H1 (cell line): ENCODE measurements at regions of chr18 and their contacts with region 1.

Region 1: GRCh38 chr18:48445540-48445939 is 36.4 kb upstream of the ZBTB7C start:
- DNase-seq: peak; percentile 31 to 92
- H3K4me3 ChIP-seq: no peak overlapping the region
- H3K27ac ChIP-seq: no peak overlapping the region
- H3K4me1 ChIP-seq: peaks cover 0 to 2% (median 2%) of the 10 kb centered on the region in 4 experiments; a peak in 2 of 7 replicates
- H3K27me3 ChIP-seq: no peaks in the 10 kb centered on the region; a peak in 1 of 7 replicates
- CTCF ChIP-seq: peak; percentile 88 to 98 (median 94)
- EP300 ChIP-seq: no peak
- POLR2A ChIP-seq: no peak
- RAD21 ChIP-seq: peak; percentile 72 to 79

Region 2: GRCh38 chr18:48024009-48024512 is 421.5 kb before region 1 on chr18:
- CTCF ChIA-PET with region 1: interaction called, 52 read pairs
- POLR2A ChIA-PET with region 1: no interaction called
- DNase-seq: no peak
- H3K4me3 ChIP-seq: no peak overlapping the region
- H3K27ac ChIP-seq: no peak overlapping the region
- H3K4me1 ChIP-seq: peaks cover 0 to 5% (median 1%) of the 10 kb centered on the region in 4 experiments; a peak in 3 of 7 replicates
- H3K27me3 ChIP-seq: no peaks in the 10 kb centered on the region
- CTCF ChIP-seq: no peak
- EP300 ChIP-seq: no peak
- POLR2A ChIP-seq: no peak
- RAD21 ChIP-seq: no peak

Region 3: DNA sequence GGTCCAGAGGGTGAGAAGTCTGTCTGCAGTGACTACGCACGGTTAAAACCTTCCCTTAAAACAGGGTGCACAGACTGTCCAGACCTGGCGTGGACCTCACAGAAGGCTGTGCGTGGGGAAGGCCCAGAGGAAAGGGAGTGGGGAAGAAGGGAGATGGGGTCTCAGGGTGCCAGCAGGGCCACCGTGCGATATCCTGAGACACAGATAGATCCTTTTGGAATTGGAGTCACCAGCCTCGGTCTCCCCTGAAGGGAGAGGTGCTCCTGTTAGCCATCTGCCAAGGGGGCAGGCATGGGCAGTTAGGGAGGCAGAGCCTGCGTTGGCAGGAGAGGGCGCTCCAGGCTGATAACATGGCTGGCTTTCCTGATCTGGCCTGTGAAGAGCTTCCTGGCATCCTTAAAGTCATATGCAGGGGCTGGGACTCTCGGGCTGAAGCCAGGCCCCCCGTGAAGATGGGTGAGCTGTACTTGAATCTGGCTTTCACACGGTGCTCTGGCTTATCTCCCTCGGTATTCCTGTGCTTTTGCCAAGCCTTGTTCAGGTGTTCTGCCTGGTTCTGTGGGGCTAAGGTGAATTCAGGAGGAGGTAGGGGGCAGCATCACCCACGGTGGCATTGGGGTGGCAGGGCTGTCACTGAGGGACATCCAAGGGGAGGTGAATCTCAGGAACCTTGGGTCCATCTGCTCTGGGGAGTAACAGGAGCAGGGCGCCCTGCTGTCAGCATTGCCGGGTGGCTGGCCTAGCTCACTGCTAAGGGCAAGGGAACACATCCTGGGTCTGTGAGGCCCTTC is 407.9 kb before region 1 on chr18:
- CTCF ChIA-PET with region 1: interaction called, 15 read pairs
- POLR2A ChIA-PET with region 1: no interaction called
- DNase-seq: peak in 1 of 2 experiments; percentile 69
- H3K4me3 ChIP-seq: no peak overlapping the region
- H3K27ac ChIP-seq: no peak overlapping the region
- H3K4me1 ChIP-seq: no peaks in the 10 kb centered on the region
- H3K27me3 ChIP-seq: no peaks in the 10 kb centered on the region; a peak in 1 of 7 replicates
- CTCF ChIP-seq: peak; percentile 78 to 88 (median 87)
- EP300 ChIP-seq: no peak
- POLR2A ChIP-seq: no peak
- RAD21 ChIP-seq: peak; percentile 83 to 86

Region 4: DNA sequence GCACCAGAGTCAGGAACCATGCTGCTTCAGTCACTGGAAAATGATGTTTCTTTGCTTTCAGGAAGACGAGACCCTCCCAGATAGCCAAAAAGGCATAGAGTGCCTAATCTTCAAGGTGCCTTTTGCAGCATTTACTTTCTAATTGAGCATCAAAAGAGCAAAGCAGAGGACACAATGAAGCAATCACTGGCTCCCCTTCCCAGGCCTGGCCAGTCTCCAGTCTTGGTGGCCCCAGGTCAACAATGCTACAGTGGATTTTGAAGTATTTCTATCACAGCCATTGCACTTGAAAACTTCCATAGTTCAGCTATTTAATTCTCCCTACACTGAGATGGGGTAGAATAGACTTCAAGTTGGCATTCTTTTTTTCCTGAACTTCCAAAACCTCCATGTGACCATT is 51.8 kb before region 1 on chr18:
- CTCF ChIA-PET with region 1: interaction called, 12 read pairs
- POLR2A ChIA-PET with region 1: no interaction called
- DNase-seq: no peak
- H3K4me3 ChIP-seq: no peak overlapping the region
- H3K27ac ChIP-seq: no peak overlapping the region
- H3K4me1 ChIP-seq: peaks cover 0 to 13% (median 1%) of the 10 kb centered on the region in 4 experiments; a peak in 2 of 7 replicates
- H3K27me3 ChIP-seq: no peaks in the 10 kb centered on the region; a peak in 2 of 7 replicates
- CTCF ChIP-seq: no peak
- EP300 ChIP-seq: no peak
- POLR2A ChIP-seq: no peak
- RAD21 ChIP-seq: no peak

Region 5: GRCh38 chr18:48419277-48420022 is 26.1 kb before region 1 on chr18:
- CTCF ChIA-PET with region 1: interaction called, 21 read pairs
- POLR2A ChIA-PET with region 1: no interaction called
- DNase-seq: no peak
- H3K4me3 ChIP-seq: no peak overlapping the region
- H3K27ac ChIP-seq: no peak overlapping the region
- H3K4me1 ChIP-seq: no peaks in the 10 kb centered on the region; a peak in 1 of 7 replicates
- H3K27me3 ChIP-seq: peaks cover 1 to 11% (median 4%) of the 10 kb centered on the region in 4 experiments; a peak in 4 of 7 replicates
- CTCF ChIP-seq: peak; percentile 43 to 68 (median 57)
- EP300 ChIP-seq: no peak
- POLR2A ChIP-seq: no peak
- RAD21 ChIP-seq: peak in 1 of 2 experiments; percentile 37; a peak in 1 of 4 replicates

Region 6: DNA sequence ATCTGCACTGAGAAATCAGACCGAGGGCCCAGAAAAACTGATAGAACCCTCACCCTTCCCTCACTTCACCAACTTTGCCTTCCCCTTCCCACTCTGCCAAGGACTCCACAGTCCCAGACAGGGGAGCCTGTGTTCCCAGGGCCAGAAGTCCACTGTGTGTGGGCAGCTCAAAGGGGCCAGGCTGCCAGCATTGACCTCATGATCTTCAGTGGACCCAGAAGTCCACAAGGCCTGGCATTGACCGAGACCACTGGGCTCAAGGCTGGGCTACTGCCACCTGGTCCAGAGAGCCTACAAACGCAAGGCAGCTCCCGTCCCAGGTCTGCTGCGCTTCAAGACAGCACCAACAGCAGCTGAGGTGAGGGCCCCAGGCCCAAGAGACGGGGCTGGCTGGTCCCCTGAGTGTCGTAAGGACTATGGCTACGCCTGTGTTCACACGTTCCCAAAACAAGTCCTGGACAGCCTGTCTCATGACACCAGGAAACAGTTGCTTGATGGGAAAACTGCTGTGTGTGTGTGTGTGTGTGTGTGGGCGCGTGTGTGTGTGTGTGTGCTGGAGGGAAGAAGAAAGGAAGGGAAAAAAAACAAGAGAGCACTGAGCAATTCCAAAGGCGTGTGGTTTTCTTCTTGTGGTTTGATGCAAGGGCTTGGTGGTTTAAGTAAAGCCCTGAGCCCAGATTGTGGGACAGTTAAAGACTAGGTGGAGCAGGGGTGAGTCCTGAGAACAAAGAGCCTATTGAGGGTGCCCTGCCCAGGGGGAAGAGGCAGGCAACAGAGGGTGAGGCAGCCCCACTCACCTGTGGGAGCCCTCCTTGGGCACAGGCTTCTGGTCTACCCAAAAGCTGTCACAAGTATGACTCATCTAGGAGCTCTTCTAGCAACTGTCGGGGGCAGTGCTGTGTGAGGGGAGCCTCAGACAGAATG is 10.3 kb after region 1 on chr18:
- CTCF ChIA-PET with region 1: interaction called, 57 read pairs
- POLR2A ChIA-PET with region 1: interaction called, 3 read pairs
- DNase-seq: no peak
- H3K4me3 ChIP-seq: no peak overlapping the region
- H3K27ac ChIP-seq: no peak overlapping the region
- H3K4me1 ChIP-seq: no peaks in the 10 kb centered on the region; a peak in 1 of 7 replicates
- H3K27me3 ChIP-seq: no peaks in the 10 kb centered on the region
- CTCF ChIP-seq: no peak
- EP300 ChIP-seq: no peak
- POLR2A ChIP-seq: no peak
- RAD21 ChIP-seq: no peak

Region 7: DNA sequence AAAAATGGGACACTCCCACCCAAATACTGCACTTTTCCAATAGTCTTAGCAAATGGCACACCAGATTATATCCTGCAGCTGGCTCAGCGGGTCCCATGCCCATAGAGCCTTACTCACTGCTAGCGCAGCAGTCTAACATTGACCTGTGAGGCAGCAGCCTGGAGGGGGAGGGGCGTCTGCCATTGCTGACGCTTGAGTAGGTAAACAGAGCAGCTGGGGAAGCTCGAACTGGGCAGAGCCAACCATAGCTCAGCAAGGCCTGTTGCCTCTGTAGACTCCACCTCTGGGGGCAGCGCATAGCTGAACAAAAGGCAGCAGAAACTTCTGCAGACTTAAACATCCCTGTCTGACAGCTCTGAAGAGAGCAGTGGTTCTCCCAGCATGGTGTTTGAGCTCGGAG is 203.7 kb after region 1 on chr18:
- CTCF ChIA-PET with region 1: no interaction called
- POLR2A ChIA-PET with region 1: no interaction called
- DNase-seq: no peak
- H3K4me3 ChIP-seq: no peak overlapping the region
- H3K27ac ChIP-seq: no peak overlapping the region
- H3K4me1 ChIP-seq: peaks cover 0 to 8% (median 2%) of the 10 kb centered on the region in 4 experiments; a peak in 2 of 7 replicates
- H3K27me3 ChIP-seq: no peaks in the 10 kb centered on the region
- CTCF ChIP-seq: peak; percentile 2 to 29 (median 17); a peak in 3 of 4 replicates
- EP300 ChIP-seq: no peak
- POLR2A ChIP-seq: no peak
- RAD21 ChIP-seq: 0 out of 4 replicates have a peak, but pooled peaks of 1 of the 2 experiments have one; percentile 15

Region 8: DNA sequence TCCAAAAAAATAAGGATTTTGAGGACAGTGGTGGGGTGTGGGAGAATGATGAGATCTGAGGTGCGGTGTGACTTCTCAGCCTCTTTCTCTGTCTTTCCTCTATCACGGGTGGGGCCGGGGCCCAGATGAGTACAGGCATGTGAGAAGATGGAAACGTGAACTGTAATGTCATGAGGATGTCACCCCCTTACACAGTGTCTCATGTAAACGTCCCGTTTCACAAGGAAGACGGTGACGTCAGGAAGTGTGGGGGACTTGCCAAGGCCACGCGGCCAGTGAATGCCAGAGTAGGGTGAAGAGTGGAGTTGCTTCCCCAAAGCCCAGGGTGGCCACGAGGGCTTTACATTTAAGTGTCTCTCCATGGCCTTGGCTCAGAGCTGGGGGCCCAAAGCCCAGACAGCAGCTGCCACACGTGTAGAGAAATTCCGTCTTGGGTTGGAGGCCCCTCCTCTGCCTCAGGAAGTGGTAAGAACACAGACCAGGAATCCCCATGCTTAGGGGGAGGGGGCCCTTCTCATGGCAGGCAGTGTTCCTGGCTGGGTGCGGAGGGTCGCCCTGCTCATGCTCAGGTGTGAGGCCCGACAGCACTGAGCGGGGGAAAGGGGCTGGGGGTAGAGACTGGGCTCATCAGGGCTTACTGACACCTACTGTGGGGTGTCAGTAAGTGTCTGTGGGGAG is 586.1 kb after region 1 on chr18:
- CTCF ChIA-PET with region 1: no interaction called
- POLR2A ChIA-PET with region 1: no interaction called
- DNase-seq: peak in 1 of 2 experiments; percentile 41
- H3K4me3 ChIP-seq: no peak overlapping the region
- H3K27ac ChIP-seq: no peak overlapping the region
- H3K4me1 ChIP-seq: no peaks in the 10 kb centered on the region
- H3K27me3 ChIP-seq: no peaks in the 10 kb centered on the region
- CTCF ChIP-seq: no peak
- EP300 ChIP-seq: no peak
- POLR2A ChIP-seq: no peak
- RAD21 ChIP-seq: peak in 1 of 2 experiments; percentile 25; a peak in 1 of 4 replicates